Heart right ventricle (tissue), 16 donors: ENCODE measurements at regions of chr17 and their contacts with region 1.

Region 1: GRCh38 chr17:67993596-67994361 is 2.5 kb downstream of the C17orf58 start:
- DNase-seq: peak; percentile 82 to 89
- ATAC-seq: peak; percentile 63 to 88 (median 82)
- H3K4me3 ChIP-seq: peak overlapping the region; percentile 44 to 98 (median 80)
- H3K27ac ChIP-seq: peak overlapping the region; percentile 85 to 99 (median 94)
- H3K4me1 ChIP-seq: peaks cover 3 to 37% (median 21%) of the 10 kb centered on the region in 9 donors
- H3K27me3 ChIP-seq: peaks cover 0 to 17% (median 0%) of the 10 kb centered on the region in 7 donors
- CTCF ChIP-seq: no peak

Region 2: DNA sequence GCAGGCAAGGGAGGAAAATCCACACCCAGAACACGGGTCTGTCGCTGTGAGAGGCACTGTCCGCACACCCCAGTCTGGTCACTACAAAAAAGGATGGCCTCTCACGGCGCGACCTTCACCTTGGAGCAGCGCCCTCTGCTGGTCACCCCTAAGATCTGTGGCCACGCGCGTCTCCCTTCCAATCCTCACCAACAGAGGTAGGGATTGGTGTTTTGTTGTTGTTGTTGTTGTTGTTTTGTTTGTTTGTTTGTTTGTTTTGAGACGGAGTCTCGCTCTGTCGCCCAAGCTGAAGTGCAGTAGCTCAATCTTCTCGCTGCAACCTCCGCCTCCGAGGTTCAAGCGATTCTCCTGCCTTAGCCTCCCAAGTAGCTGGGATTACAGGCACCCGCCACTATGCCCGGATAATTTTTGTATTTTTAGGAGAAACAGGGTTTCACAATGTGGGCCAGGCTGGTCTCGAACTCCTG is 17.5 kb after region 1 on chr17:
- intact Hi-C with region 1: loop called in 1 of 10 experiments (anchors 1 kb)
- DNase-seq: peak; percentile 46 to 57
- ATAC-seq: peak in 7 of 8 donors; percentile 57 to 84 (median 71)
- H3K4me3 ChIP-seq: no peak overlapping the region
- H3K27ac ChIP-seq: no peak overlapping the region
- H3K4me1 ChIP-seq: peaks cover 0 to 3% (median 0%) of the 10 kb centered on the region in 9 donors
- H3K27me3 ChIP-seq: no peaks in the 10 kb centered on the region
- CTCF ChIP-seq: peak; percentile 29 to 77 (median 64)

Region 3: DNA sequence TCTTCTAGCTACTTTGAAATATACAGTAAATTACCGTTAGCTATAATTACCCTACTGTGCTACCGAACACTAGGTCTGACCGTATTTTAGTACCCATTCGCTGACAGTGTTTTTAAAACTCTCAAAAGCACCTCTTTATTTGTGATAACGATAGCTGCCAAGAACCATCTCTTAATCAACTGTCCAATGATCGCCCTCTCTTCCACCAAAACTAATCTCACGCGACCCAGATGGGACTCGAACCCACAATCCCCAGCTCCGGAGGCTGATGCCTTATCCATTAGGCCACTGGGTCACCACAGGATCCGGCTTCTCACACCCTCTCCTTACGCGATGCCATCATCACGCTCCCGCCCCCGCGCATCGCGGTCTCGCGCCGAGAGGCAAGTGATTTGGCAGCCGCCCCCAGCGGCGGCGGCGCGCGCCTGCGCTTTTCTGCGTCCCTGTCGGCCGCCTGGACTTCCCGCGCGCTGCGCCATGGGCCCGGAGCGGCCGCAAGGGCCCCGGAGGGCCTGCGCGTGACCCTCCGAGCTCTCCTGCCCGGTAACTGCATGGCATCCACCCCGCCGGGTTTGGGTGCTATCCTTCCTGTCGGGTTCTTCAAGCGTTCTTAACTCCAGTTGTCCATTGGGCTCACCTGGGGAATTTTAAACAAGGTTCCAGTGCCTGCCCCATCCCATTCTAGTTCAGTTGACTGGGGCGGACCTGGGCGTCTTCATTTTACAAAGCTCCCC is 26.1 kb after region 1 on chr17:
- intact Hi-C with region 1: loop called in 3 of 10 experiments (anchors 1 to 2 kb)
- DNase-seq: peak; percentile 97
- ATAC-seq: peak; percentile 95 to 98 (median 96)
- H3K4me3 ChIP-seq: peak overlapping the region; percentile 39 to 78 (median 61)
- H3K27ac ChIP-seq: peak overlapping the region; percentile 80 to 93 (median 84)
- H3K4me1 ChIP-seq: peaks cover 0 to 9% (median 6%) of the 10 kb centered on the region in 9 donors
- H3K27me3 ChIP-seq: no peaks in the 10 kb centered on the region
- CTCF ChIP-seq: peak; percentile 31 to 61 (median 47)

Region 4: DNA sequence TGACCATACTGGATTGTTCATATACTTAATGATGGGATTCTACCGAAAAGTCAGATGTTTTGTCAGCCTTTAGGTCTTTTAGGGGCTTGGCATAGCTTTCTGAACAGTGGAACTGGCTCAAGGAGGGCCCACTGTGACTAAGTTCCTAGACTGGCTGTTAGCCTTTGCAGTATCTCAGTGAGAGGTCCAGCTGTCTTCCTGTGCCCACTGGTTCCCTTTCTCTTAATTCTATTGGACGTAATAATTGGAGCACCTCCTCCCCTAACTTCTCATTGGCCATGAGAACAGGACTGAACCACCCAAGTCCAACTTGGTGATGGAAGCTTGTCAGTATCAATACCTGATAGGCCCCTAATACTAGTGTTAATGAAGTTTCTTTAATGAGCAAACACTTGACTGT is 55.2 kb after region 1 on chr17:
- intact Hi-C with region 1: no loop called
- DNase-seq: no peak
- ATAC-seq: no peak
- H3K4me3 ChIP-seq: no peak overlapping the region
- H3K27ac ChIP-seq: peak overlapping the region in 1 of 10 donors; percentile 23
- H3K4me1 ChIP-seq: peaks cover 0 to 31% (median 15%) of the 10 kb centered on the region in 9 donors
- H3K27me3 ChIP-seq: no peaks in the 10 kb centered on the region
- CTCF ChIP-seq: no peak